Calu3 (cell line): ENCODE measurements at regions of chr17 and their contacts with region 1.

Region 1: GRCh38 chr17:77429919-77430752 is 289.4 kb downstream of the SEC14L1 start:
- DNase-seq: peak; percentile 87
- H3K4me3 Mint-ChIP-seq: no peak overlapping the region
- H3K27ac Mint-ChIP-seq: no peak overlapping the region
- H3K4me1 Mint-ChIP-seq: peaks cover 36% of the 10 kb centered on the region
- H3K27me3 Mint-ChIP-seq: no peaks in the 10 kb centered on the region
- CTCF ChIP-seq: peak; percentile 71

Region 2: DNA sequence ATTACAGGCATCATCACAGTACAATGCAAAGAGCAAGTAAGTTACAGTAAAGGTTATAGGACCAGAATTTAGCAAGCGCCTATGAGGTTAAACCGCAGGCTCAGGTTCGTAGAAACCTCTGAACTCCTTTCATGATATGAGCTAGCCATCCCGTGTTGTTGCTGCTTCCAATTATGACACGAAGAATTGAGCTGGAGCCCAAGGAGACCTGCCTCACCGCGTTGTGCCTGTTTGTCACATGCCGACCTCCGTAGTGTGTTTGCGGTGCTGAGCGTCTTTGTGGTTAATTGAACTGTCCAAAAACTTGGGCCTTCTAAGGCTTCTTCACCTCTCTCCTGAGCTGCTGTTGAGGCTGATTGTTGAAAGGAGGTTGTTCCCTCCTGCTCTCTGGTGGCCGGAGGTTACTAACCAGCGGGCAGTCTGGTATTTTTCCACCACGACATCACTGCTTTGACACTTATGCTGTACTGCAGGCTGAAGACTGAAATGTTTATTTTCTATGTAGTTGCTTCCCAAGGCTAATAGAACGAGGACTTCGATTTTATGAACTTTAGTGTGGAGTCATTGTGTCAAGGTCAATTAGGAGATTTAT is 221.8 kb before region 1 on chr17:
- CTCF ChIA-PET with region 1: no interaction called
- intact Hi-C with region 1: no loop called
- DNase-seq: no peak
- H3K4me3 Mint-ChIP-seq: no peak overlapping the region
- H3K27ac Mint-ChIP-seq: peak overlapping the region; percentile 44
- H3K4me1 Mint-ChIP-seq: no peaks in the 10 kb centered on the region
- H3K27me3 Mint-ChIP-seq: no peaks in the 10 kb centered on the region
- CTCF ChIP-seq: no peak

Region 3: DNA sequence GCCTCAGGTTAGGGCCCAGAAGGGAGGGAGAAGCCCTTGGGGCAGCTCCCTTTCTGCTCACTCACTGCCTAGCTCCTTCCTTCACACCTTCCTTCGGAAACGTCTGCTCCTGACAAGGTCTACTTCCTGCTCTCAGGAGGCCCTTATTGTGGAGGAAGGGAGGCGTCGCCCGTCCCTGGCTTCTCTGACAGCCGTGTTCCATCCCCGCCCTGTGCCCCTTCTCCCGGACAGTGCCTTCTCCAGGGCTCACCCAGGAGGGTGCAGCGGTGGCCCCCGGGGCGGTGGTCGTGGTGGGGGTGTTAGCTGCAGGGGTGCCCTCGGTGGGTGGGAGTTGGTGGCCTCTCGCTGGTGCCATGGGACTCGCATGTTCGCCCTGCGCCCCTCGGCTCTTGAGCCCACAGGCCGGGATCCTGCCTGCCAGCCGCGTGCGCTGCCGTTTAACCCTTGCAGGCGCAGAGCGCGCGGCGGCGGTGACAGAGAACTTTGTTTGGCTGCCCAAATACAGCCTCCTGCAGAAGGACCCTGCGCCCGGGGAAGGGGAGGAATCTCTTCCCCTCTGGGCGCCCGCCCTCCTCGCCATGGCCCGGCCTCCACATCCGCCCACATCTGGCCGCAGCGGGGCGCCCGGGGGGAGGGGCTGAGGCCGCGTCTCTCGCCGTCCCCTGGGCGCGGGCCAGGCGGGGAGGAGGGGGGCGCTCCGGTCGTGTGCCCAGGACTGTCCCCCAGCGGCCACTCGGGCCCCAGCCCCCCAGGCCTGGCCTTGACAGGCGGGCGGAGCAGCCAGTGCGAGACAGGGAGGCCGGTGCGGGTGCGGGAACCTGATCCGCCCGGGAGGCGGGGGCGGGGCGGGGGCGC is 57.5 kb before region 1 on chr17:
- CTCF ChIA-PET with region 1: no interaction called
- intact Hi-C with region 1: no loop called
- DNase-seq: no peak
- H3K4me3 Mint-ChIP-seq: no peak overlapping the region
- H3K27ac Mint-ChIP-seq: no peak overlapping the region
- H3K4me1 Mint-ChIP-seq: peaks cover 54% of the 10 kb centered on the region
- H3K27me3 Mint-ChIP-seq: no peaks in the 10 kb centered on the region
- CTCF ChIP-seq: no peak

Region 4: GRCh38 chr17:77451245-77451893 is 21.2 kb after region 1 on chr17:
- CTCF ChIA-PET with region 1: interaction called, 14 read pairs
- intact Hi-C with region 1: no loop called
- DNase-seq: peak; percentile 92
- H3K4me3 Mint-ChIP-seq: peak overlapping the region; percentile 84
- H3K27ac Mint-ChIP-seq: peak overlapping the region; percentile 91
- H3K4me1 Mint-ChIP-seq: peaks cover 78% of the 10 kb centered on the region
- H3K27me3 Mint-ChIP-seq: no peaks in the 10 kb centered on the region
- CTCF ChIP-seq: no peak

Region 5: DNA sequence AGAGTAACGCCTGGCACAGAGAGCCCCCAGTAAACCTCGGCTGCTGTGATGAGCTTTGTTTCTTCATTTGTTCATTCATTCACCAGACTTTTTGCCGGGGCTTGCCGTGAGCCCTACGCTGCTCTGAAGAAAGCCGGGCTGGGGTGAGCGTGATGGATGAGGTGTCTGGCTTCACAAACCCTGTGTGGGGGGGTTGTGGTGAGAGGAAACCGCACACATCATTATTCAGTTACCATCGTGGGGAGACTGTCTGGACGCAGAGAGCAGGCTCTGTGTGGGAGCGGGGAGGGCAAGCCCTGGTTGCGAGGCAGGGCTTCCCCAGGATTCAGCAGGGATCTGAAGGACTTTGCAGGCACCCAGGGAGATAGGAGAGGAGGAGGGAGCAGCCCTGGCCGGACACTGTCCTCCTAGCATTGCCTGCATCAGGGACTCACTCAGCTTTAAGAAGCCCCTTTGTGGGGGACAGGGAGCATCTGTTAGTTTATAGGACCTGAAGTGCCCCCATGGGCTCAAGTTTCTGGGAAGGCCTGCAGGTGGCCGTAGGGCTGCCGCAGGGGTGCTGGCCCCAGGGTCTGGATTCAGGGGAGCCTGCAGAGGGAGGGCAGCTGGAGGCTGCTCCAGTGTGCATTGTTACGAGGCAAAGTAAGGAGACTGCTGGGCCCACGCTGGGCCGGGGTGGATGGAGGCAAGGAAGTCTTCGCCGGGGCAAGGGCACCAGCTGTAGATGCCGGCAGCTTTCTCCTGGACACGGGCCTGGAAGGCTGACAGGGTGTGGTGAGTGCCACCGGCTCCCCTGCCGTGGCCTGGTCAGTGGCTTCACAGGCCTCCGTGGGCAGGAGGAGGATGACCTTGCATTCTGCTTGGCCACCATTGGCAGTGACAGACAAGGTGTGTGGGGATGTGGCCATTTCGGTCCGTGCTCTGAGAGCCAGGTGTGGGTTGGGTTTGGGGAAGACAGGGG is 45.2 kb after region 1 on chr17:
- CTCF ChIA-PET with region 1: interaction called, 11 read pairs
- intact Hi-C with region 1: no loop called
- DNase-seq: no peak
- H3K4me3 Mint-ChIP-seq: peak overlapping the region; percentile 29
- H3K27ac Mint-ChIP-seq: peak overlapping the region; percentile 92
- H3K4me1 Mint-ChIP-seq: peaks cover 64% of the 10 kb centered on the region
- H3K27me3 Mint-ChIP-seq: no peaks in the 10 kb centered on the region
- CTCF ChIP-seq: no peak

Region 6: GRCh38 chr17:77494664-77495435 is 64.7 kb after region 1 on chr17:
- CTCF ChIA-PET with region 1: interaction called, 7 read pairs
- intact Hi-C with region 1: loop called (anchors 2 kb)
- DNase-seq: peak; percentile 84
- H3K4me3 Mint-ChIP-seq: no peak overlapping the region
- H3K27ac Mint-ChIP-seq: no peak overlapping the region
- H3K4me1 Mint-ChIP-seq: no peaks in the 10 kb centered on the region
- H3K27me3 Mint-ChIP-seq: no peaks in the 10 kb centered on the region
- CTCF ChIP-seq: peak; percentile 95